Naive thymus-derived CD8-positive, alpha-beta T cell (primary cell): ENCODE measurements at regions of chr11 and their contacts with region 1.

Region 1: DNA sequence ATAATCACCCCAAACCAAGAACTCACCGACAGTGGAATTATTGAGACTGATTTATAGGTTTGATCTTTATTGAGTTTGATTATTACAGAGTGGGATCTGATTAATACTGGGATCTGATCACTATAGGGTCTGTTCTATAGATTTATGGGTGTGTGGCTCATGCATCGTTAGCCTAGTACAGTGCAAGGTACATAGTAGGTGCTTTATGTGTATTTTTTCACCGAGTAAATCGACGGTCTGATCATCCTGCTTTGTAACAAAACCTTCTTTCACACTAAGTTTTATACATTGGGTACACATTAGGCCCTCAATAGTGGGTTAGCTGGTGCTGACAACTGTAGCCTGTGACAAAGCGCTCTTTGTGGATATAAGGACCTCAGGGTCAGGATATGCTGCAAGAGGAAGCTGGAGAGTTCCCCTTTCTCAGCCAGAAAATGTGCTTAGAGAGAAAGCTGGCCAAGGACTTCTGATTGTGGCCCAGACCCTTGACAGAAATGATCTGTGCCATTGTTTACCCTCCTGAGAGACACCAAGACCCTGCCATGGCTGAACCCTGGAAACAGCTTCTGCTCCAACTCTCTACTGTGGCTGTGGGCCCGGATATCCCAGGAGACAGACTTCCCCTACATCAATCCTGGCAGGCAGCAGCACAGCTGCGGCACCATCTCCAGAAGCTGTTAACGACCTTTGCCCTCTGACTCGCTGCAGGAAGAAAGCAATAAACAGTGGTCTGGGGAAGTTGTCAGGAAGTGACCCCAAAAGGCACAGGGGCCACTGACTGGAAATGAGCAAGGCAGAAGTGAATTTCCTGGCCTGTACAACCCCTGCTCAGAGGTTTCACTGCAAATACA is 16.1 kb upstream of the TPP1 start:
- DNase-seq: no peak
- ATAC-seq: no peak
- H3K4me3 Mint-ChIP-seq: no peak overlapping the region
- H3K27ac Mint-ChIP-seq: peak overlapping the region in 2 of 10 donors; percentile 21 to 46
- H3K4me1 Mint-ChIP-seq: peaks cover 2 to 18% (median 6%) of the 10 kb centered on the region in 4 donors
- H3K27me3 Mint-ChIP-seq: no peaks in the 10 kb centered on the region

Region 2: DNA sequence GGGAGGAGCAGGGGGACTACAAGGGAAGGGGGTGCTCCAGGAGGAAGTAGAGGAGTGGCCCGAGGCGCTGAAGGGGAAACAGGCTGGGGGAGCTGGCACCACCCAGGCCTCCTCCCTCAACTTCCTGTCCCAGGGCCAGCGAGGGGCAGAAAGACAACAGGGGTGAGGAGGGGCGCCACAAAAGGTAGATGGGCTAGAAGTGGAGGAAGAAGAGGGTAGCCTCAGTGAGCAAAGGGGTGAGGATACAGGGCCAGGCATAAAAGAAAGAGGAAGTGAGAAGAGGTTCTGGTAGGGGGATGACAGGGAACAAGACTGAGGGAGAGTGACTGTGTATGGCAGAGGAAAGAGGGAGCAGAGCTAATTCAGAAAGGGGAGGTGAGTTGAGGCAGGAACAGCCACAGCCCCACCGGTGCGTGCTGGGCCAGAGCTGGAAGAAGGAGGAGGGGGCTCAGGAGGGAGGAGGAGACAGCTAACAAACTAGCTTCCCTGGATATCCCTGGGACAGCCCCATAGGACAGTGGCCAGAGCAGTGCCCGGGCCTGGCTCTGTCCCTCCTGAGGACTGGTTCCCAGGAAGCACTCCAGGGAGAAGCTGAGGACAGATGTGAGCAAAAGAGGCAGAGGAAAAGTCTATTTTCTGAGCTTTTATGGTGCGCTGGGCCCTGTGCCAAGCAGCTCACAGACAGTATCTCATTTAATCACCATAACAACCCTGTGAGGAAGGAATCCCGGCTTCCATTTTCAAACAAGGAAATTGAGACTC is 11.8 kb after region 1 on chr11:
- POLR2A ChIA-PET with region 1: interaction called, 18 read pairs
- DNase-seq: peak in 7 of 10 donors; percentile 18 to 45 (median 37)
- ATAC-seq: peak; percentile 73 to 78
- H3K4me3 Mint-ChIP-seq: no peak overlapping the region
- H3K27ac Mint-ChIP-seq: no peak overlapping the region
- H3K4me1 Mint-ChIP-seq: peaks cover 0 to 12% (median 0%) of the 10 kb centered on the region in 4 donors
- H3K27me3 Mint-ChIP-seq: no peaks in the 10 kb centered on the region